ENCODE measurements at regions of chr10 and their contacts with region 1.

Region 1: DNA sequence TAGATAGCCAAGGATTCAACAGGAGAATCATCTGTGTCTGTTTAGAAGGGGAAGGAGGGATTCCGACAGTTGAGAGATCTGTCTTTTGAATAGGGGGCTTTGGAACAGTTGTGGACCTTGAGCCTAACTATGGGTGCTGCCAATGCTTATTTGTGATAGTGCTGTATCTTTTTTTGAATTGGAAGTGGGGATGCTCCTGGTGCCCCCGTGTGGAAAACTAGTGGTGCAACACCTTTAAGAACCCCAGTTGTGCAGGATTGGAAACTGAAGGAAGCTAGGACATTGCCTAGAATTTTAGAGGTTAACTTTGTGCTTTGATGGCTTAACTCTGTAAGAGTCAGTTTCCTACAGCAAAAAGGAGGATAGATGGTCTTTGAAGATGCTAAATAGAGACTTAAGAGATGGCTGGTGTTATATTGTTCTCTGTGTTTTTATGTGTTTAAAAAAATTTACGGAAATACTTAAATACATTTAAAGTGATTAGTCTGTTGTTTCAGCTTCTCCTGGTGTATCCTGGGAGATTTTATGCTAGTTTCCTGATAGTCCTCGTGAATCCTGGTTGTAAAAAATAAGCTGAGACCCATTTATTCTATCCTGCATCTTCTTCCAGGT is 69.3 kb downstream of the AP3M1 start:
- H3K4me3 Mint-ChIP-seq: no peak overlapping the region
- H3K27ac Mint-ChIP-seq: no peak overlapping the region
- H3K4me1 Mint-ChIP-seq: peaks cover 31% of the 10 kb centered on the region
- H3K27me3 Mint-ChIP-seq: no peaks in the 10 kb centered on the region

Region 2: GRCh38 chr10:73940634-73941221 is 140.6 kb before region 1 on chr10:
- intact Hi-C with region 1: loop called (anchors 5 kb)
- H3K4me3 Mint-ChIP-seq: peak overlapping the region; percentile 69
- H3K27ac Mint-ChIP-seq: peak overlapping the region; percentile 92
- H3K4me1 Mint-ChIP-seq: peaks cover 22% of the 10 kb centered on the region
- H3K27me3 Mint-ChIP-seq: peaks cover 1% of the 10 kb centered on the region